Heart left ventricle (tissue), 16 donors: ENCODE measurements at regions of chr15 and their contacts with region 1.

Region 1: DNA sequence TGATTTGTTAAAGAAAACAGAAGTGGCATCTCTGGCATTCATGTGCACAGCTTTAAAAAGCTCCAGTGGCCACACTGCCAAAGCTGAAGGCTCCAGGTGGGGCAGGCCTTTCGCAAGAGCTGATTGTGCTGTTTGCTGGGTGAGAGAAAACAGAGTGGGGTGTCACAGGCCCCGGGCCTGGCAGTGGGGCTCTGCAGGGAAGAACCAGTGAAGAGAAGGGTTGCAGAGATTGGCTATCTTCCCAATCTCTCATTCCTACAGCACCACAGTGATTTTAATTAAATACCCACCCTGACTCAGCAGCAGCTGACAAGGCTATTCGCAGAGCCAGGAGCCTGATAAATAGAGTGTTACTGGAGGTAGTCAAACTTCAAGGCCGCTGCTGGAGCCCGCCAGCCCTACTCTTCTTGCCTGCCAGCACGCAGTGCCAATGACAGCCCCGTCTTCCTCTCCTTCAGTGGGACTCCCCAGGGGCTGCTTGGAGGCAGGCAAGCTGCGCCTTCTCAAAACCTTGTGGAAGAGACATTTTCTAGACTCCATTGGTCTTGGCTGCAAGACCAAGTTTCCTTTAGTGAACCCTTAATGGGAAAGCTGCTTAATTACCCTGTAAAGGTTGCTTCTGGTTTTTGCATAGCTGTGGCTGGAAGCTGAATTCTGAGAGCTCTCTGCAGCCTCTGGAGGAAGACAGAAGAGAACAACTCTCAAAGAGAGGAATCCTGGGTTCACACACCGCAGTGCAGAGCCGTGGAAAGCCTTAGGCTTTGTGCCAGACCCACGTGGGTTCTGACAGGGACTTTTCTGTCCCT is 225.8 kb upstream of the SLCO3A1 start:
- DNase-seq: peak; percentile 40 to 77 (median 68)
- ATAC-seq: peak; percentile 87 to 94 (median 92)
- H3K4me3 ChIP-seq: no peak overlapping the region
- H3K27ac ChIP-seq: peak overlapping the region; percentile 39 to 77 (median 69)
- H3K4me1 ChIP-seq: peaks cover 0 to 23% (median 12%) of the 10 kb centered on the region in 12 donors
- H3K27me3 ChIP-seq: no peaks in the 10 kb centered on the region
- CTCF ChIP-seq: no peak
- POLR2A ChIP-seq: no peak

Region 2: GRCh38 chr15:91529534-91529933 is 98.1 kb before region 1 on chr15:
- intact Hi-C with region 1: loop called in 1 of 10 experiments (anchors 5 kb)
- DNase-seq: no peak
- ATAC-seq: no peak
- H3K4me3 ChIP-seq: no peak overlapping the region
- H3K27ac ChIP-seq: no peak overlapping the region
- H3K4me1 ChIP-seq: peaks cover 0 to 16% (median 0%) of the 10 kb centered on the region in 12 donors
- H3K27me3 ChIP-seq: no peaks in the 10 kb centered on the region
- CTCF ChIP-seq: no peak
- POLR2A ChIP-seq: no peak

Region 3: DNA sequence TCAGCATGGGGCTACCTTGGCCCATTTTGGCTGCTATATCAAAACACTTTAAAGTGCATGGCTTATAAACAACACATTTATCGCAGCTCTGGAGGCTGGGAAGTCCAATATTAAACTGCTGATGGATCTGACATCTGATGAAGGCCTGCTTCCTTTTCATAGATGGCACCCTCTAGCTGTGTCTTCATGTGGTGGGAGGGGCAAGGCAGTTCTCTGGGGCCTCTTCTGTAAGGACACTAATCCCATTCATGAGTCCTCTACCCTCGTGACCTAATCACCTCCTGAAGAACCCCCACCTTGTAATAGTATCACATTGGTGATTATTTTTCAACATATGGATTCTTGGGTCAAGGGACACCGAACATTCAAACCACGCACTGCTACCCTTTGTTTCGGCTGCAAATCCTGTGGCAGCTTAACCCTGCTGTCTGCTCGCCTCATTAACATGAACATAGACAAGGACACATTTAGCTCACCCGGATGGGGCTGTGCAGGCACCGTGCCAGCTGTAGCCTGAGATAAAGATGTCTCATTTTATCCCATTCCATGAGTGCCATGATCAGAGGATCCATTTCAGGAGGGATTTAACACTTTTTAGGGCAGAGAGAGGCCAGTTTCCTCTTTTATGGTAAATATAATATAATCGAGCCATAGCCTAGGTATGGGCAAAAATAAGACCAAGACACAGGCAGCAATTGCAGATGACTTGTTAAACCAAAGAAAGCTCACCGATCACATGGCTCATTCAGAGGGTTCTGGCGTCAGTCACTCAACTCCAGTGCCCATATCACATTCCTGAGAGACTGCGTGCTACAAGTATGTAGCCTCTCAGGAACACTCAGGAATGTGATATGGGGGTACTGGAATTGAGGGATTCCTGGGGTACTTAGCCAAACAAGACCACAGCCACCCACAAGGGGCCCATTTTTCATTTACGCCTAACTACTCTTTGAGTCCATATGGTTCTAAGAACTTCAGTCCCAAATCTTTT is 514.9 kb after region 1 on chr15:
- intact Hi-C with region 1: no loop called
- DNase-seq: peak; percentile 39 to 71 (median 63)
- ATAC-seq: peak; percentile 85 to 90 (median 87)
- H3K4me3 ChIP-seq: no peak overlapping the region
- H3K27ac ChIP-seq: peak overlapping the region; percentile 8 to 92 (median 66)
- H3K4me1 ChIP-seq: peaks cover 0 to 26% (median 6%) of the 10 kb centered on the region in 12 donors
- H3K27me3 ChIP-seq: no peaks in the 10 kb centered on the region
- CTCF ChIP-seq: no peak
- POLR2A ChIP-seq: no peak